Activated B cell treated with CpG ODN at 0.5 μM for 24 hours (primary cell): ENCODE measurements at regions of chr10 and their contacts with region 1.

Region 1: GRCh38 chr10:15209827-15210509 is 41.5 kb upstream of the NMT2 start:
- DNase-seq: peak; percentile 50
- ATAC-seq: peak; percentile 64
- H3K4me3 Mint-ChIP-seq: no peak overlapping the region
- H3K27ac Mint-ChIP-seq: no peak overlapping the region
- H3K4me1 Mint-ChIP-seq: peaks cover 22% of the 10 kb centered on the region
- H3K27me3 Mint-ChIP-seq: no peaks in the 10 kb centered on the region
- CTCF ChIP-seq: peak; percentile 75

Region 2: GRCh38 chr10:15141136-15142054 is 68.6 kb before region 1 on chr10:
- CTCF ChIA-PET with region 1: no interaction called
- POLR2A ChIA-PET with region 1: interaction called, 3 read pairs
- intact Hi-C with region 1: loop called (anchors 1 kb)
- DNase-seq: peak; percentile 32
- ATAC-seq: peak; percentile 94
- H3K4me3 Mint-ChIP-seq: peak overlapping the region; percentile 74
- H3K27ac Mint-ChIP-seq: peak overlapping the region; percentile 69
- H3K4me1 Mint-ChIP-seq: peaks cover 40% of the 10 kb centered on the region
- H3K27me3 Mint-ChIP-seq: no peaks in the 10 kb centered on the region
- CTCF ChIP-seq: no peak

Region 3: GRCh38 chr10:15189133-15189885 is 20.7 kb before region 1 on chr10:
- CTCF ChIA-PET with region 1: no interaction called
- POLR2A ChIA-PET with region 1: interaction called, 3 read pairs
- intact Hi-C with region 1: loop called (anchors 1 kb)
- DNase-seq: no peak
- ATAC-seq: peak; percentile 81
- H3K4me3 Mint-ChIP-seq: peak overlapping the region; percentile 29
- H3K27ac Mint-ChIP-seq: peak overlapping the region; percentile 9
- H3K4me1 Mint-ChIP-seq: peaks cover 16% of the 10 kb centered on the region
- H3K27me3 Mint-ChIP-seq: no peaks in the 10 kb centered on the region
- CTCF ChIP-seq: no peak

Region 4: GRCh38 chr10:15369256-15370211 is 159.6 kb after region 1 on chr10:
- CTCF ChIA-PET with region 1: no interaction called
- POLR2A ChIA-PET with region 1: no interaction called
- intact Hi-C with region 1: no loop called
- DNase-seq: no peak
- ATAC-seq: no peak
- H3K4me3 Mint-ChIP-seq: peak overlapping the region; percentile 55
- H3K27ac Mint-ChIP-seq: no peak overlapping the region
- H3K4me1 Mint-ChIP-seq: peaks cover 11% of the 10 kb centered on the region
- H3K27me3 Mint-ChIP-seq: peaks cover 57% of the 10 kb centered on the region
- CTCF ChIP-seq: no peak